AG04449 (cell line): ENCODE measurements at regions of chr2 and their contacts with region 1.

Region 1: DNA sequence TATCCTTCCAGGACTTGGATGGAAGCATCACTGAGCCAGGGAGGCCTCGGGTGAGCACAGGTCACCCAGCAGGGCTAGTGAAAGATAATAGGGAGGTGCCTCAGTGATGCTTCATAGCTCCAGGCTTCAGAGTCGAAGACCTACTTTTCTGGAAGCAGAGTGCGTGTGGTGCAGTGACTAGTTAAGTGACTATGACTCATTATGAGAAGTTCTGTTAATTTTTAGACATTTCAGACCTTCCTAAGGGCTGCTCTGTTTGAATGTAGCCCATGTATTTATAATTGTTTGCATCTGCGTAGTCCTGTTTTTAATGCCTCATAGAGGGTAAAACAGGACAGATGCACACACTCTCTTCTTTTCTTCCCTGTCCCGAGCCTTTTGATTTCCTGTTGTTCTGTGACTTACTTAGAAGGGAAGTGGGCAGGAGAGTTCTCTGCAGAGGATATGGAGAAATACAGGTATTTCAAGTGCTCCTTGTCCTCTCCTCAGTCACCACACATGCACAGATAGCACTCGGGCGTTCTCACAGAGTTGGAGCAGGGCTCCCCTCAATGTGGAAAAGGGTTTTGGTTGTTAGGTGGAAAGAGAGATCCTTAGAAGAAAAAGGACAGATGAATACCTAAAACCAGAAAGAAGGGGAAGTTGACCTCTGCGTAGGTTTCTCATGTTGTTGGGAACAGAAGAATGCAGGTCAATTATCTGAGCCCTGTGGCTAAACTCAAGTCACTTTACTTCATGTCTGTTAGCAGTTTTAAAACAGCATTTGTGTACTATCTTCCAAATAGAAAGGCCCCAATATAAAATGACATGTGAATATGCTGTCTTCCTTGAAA is 34.7 kb downstream of the RALB start:
- DNase-seq: peak; percentile 64
- H3K4me3 ChIP-seq: no peak overlapping the region
- CTCF ChIP-seq: no peak

Region 2: DNA sequence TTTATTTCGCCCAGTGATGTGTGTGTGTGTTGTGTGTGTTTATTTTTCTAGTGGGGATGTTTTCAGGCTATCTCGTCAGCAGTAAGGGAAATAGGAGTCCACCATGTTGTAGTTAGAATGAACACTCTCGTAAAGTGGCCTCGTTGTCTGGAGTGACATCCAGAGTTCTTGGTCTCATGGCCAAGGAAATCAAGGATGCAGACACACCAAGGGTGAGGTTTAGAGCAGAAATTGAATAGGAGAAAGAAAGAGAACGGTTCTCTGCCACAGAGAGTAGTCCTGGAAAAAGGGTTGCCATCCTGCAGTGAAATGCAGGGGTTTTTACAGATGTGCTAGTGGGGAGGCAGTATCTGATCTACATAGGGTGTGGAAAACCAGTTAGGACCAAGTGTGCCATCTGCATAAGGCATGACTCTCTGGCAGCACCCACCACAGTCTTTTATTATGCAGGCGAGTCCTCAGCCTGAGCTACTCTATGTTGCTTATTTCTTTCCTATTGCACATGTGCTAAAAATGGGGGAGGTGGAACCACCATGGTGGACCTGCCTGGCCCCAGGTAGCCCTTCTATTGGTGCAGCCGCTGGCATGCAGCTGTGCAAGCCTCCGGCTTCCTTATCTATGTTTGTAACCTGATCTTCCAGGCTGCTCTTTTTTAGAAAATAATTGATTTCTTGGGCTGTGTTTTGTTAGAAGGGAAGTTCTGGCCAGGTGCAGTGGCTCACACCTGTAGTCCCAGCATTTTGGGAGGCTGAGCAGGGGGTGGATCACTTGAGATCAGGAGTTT is 11.6 kb before region 1 on chr2:
- CTCF ChIA-PET with region 1: interaction called, 10 read pairs
- POLR2A ChIA-PET with region 1: no interaction called
- DNase-seq: no peak
- H3K4me3 ChIP-seq: no peak overlapping the region
- CTCF ChIP-seq: no peak